ENCODE measurements at regions of chr1 and their contacts with region 1.

Region 1: GRCh38 chr1:1517973-1518620 is 6.1 kb downstream of the ATAD3A start:
- DNase-seq: no peak
- ATAC-seq: no peak
- H3K4me3 ChIP-seq: no peak overlapping the region
- H3K27ac ChIP-seq: no peak overlapping the region
- H3K4me1 ChIP-seq: peaks cover 0 to 5% of the 10 kb centered on the region in 2 donors
- H3K27me3 ChIP-seq: no peaks in the 10 kb centered on the region
- CTCF ChIP-seq: no peak

Region 2: GRCh38 chr1:1479547-1480487 is 38.3 kb before region 1 on chr1:
- intact Hi-C with region 1: loop called in 1 of 2 experiments (anchors 5 kb)
- DNase-seq: no peak
- ATAC-seq: no peak
- H3K4me3 ChIP-seq: no peak overlapping the region
- H3K27ac ChIP-seq: no peak overlapping the region
- H3K4me1 ChIP-seq: no peaks in the 10 kb centered on the region
- H3K27me3 ChIP-seq: no peaks in the 10 kb centered on the region
- CTCF ChIP-seq: no peak

Measured in left lung (tissue), 14 donors.